ENCODE measurements at regions of chr16 and their contacts with region 1.

Region 1: GRCh38 chr16:85610508-85611332 is 2.4 kb upstream of the GSE1 start:
- DNase-seq: peak; percentile 92
- H3K4me3 Mint-ChIP-seq: peak overlapping the region; percentile 66
- H3K27ac Mint-ChIP-seq: peak overlapping the region; percentile 49
- H3K4me1 Mint-ChIP-seq: peaks cover 32% of the 10 kb centered on the region
- H3K27me3 Mint-ChIP-seq: peaks cover 2% of the 10 kb centered on the region

Region 2: DNA sequence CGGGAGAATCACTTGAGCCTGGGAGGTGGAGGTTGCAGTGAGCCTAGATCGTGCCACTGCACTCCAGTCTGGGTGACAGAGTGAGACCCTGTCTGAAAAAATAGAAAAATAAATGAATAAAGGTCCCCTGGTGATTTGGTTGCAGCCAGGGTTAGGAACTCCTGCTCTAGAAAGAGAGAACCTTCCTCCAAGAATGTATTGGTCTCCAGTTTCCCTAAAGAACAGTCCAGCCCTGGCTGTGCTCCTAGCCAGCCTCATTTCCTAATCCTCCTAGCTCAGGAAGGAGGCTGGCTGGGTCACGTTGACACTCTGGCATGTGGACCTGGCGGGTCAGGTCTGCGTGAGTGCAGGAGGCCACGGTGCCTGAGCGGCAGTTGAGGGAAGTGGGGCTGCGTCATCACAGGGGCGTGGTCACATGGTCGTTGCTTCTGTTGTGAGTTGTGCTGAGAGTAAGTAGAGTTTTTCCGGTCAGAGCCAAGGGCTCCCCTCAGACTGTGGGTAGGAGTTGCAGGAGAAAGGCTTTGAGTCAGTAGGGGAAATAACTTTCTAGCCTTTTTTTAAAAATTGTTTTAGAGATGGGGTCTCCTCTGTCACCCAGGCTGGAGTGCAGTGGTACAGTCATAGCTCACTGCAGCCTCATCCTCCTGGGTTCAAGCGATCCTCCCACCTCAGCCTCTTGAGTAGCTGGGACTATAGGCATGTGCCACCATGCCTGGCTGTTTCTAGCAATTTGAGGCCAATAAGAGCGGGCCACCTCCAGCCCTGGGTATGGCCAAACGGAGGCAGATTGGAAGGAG is 304.5 kb before region 1 on chr16:
- CTCF ChIA-PET with region 1: interaction called, 5 read pairs
- POLR2A ChIA-PET with region 1: no interaction called
- intact Hi-C with region 1: loop called (anchors 10 kb)
- DNase-seq: peak; percentile 93
- H3K4me3 Mint-ChIP-seq: no peak overlapping the region
- H3K27ac Mint-ChIP-seq: peak overlapping the region; percentile 79
- H3K4me1 Mint-ChIP-seq: peaks cover 33% of the 10 kb centered on the region
- H3K27me3 Mint-ChIP-seq: peaks cover 6% of the 10 kb centered on the region

Region 3: GRCh38 chr16:85354686-85355514 is 255.8 kb before region 1 on chr16:
- CTCF ChIA-PET with region 1: no interaction called
- POLR2A ChIA-PET with region 1: no interaction called
- intact Hi-C with region 1: no loop called
- DNase-seq: no peak
- H3K4me3 Mint-ChIP-seq: no peak overlapping the region
- H3K27ac Mint-ChIP-seq: no peak overlapping the region
- H3K4me1 Mint-ChIP-seq: no peaks in the 10 kb centered on the region
- H3K27me3 Mint-ChIP-seq: peaks cover 4% of the 10 kb centered on the region

Region 4: DNA sequence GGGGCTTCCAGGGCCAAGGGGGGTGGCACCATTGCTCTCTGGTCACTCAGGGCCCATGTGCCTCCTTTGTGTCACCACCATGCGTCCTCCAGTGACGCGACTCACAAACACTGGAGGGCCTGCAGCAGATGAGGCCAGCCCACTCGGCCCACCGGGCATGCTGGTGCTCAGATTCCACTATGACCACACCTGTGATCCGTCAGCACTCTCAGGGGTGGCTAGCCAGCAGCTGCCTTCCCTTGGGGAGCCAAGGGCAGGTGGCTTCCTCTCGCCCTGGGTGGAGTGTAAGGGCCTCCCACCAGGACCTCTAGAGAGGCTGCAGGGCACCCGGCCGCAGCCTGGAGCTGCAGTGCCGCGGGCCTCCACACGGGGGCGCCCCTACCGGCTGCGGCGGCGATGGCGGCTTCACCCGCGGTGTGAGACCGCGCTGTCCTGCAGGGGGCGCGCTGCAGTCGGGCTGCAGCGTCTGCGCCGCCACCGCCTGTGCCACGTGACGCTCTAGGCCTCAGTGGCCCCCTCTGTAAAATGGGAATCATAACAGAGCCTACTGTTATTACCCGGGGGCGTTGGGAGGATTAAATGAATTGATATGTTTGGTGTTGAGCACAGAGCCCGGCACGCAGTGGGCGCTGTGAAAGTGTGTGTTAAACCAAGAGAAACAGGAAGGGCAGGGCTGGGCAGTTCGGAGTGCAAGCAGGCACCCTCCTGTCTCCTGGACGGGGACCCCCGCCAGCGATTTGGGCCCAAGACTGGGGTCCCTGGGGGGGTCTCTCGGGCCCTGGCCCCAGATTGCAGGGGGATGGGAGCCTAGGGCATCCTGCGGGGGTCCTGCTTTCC is 190.0 kb before region 1 on chr16:
- CTCF ChIA-PET with region 1: interaction called, 271 read pairs
- POLR2A ChIA-PET with region 1: no interaction called
- intact Hi-C with region 1: loop called (anchors 1 kb)
- DNase-seq: peak; percentile 78
- H3K4me3 Mint-ChIP-seq: no peak overlapping the region
- H3K27ac Mint-ChIP-seq: no peak overlapping the region
- H3K4me1 Mint-ChIP-seq: peaks cover 2% of the 10 kb centered on the region
- H3K27me3 Mint-ChIP-seq: peaks cover 4% of the 10 kb centered on the region

Region 5: GRCh38 chr16:85518398-85519039 is 92.2 kb before region 1 on chr16:
- CTCF ChIA-PET with region 1: no interaction called
- POLR2A ChIA-PET with region 1: no interaction called
- intact Hi-C with region 1: no loop called
- DNase-seq: no peak
- H3K4me3 Mint-ChIP-seq: no peak overlapping the region
- H3K27ac Mint-ChIP-seq: no peak overlapping the region
- H3K4me1 Mint-ChIP-seq: no peaks in the 10 kb centered on the region
- H3K27me3 Mint-ChIP-seq: no peaks in the 10 kb centered on the region

Region 6: GRCh38 chr16:85528528-85529387 is 82.0 kb before region 1 on chr16:
- CTCF ChIA-PET with region 1: interaction called, 12 read pairs
- POLR2A ChIA-PET with region 1: no interaction called
- intact Hi-C with region 1: no loop called
- DNase-seq: peak; percentile 45
- H3K4me3 Mint-ChIP-seq: no peak overlapping the region
- H3K27ac Mint-ChIP-seq: no peak overlapping the region
- H3K4me1 Mint-ChIP-seq: no peaks in the 10 kb centered on the region
- H3K27me3 Mint-ChIP-seq: peaks cover 2% of the 10 kb centered on the region

Region 7: GRCh38 chr16:85569615-85570212 is 41.0 kb before region 1 on chr16:
- CTCF ChIA-PET with region 1: interaction called, 15 read pairs
- POLR2A ChIA-PET with region 1: no interaction called
- intact Hi-C with region 1: loop called (anchors 5 kb)
- DNase-seq: peak; percentile 67
- H3K4me3 Mint-ChIP-seq: peak overlapping the region; percentile 45
- H3K27ac Mint-ChIP-seq: peak overlapping the region; percentile 79
- H3K4me1 Mint-ChIP-seq: peaks cover 61% of the 10 kb centered on the region
- H3K27me3 Mint-ChIP-seq: no peaks in the 10 kb centered on the region

Region 8: GRCh38 chr16:85642762-85643358 is 32.1 kb after region 1 on chr16:
- CTCF ChIA-PET with region 1: no interaction called
- POLR2A ChIA-PET with region 1: no interaction called
- intact Hi-C with region 1: no loop called
- DNase-seq: no peak
- H3K4me3 Mint-ChIP-seq: no peak overlapping the region
- H3K27ac Mint-ChIP-seq: no peak overlapping the region
- H3K4me1 Mint-ChIP-seq: peaks cover 5% of the 10 kb centered on the region
- H3K27me3 Mint-ChIP-seq: no peaks in the 10 kb centered on the region